Activated naive CD4-positive, alpha-beta T cell treated with anti-CD3 and anti-CD28 coated beads for 36 hours (primary cell): ENCODE measurements at regions of chr16 and their contacts with region 1.

Region 1: DNA sequence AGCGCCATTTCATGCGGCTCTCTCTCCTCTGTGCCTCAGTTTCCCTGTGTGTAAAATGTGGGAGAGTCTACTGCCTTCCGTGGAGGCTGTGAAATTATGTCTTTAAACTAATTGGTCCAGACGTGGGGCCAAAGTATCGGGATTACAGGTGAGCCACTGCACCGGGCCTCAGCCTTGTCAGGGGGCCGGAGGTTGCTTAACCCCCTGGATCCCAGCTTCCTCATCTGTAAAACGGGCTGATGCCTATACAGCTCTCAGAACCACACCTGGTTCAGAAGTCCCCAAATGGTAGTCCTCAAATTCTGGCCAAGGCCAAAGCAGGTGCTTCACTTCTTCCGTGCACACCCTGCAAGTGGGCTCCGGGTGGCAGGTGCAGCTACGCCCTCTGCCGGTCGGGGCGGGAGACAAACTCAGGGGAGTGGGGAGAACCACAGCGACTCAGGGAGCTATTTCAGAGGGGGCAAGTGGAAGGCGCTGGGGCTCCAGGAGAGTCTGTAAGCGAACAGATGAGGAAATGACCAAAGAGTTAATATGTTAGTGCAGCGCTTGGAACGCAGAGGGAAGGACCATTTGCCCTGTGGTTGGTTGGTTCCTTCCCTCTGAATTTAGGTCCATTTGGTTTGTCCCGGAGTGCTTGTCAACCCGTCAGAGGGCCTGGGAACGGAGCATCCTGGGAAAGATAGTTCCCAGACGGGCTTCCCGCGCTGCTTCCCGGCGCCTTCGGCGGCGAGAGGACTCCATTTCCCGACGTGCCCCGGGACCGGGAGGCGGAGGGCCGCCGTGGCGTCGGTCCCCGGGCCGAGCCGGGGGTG is at the start of gene MGRN1:
- DNase-seq: peak; percentile 96
- H3K4me3 Mint-ChIP-seq: peak within 1 kb of the TSS; percentile 97
- H3K27ac Mint-ChIP-seq: peak within 1 kb of the TSS; percentile 99
- H3K4me1 Mint-ChIP-seq: peaks cover 30% of the 10 kb centered on the region
- H3K27me3 Mint-ChIP-seq: no peaks in the 10 kb centered on the region
- total RNA-seq, gene MGRN1: 46.3 to 48.8 TPM

Region 2: DNA sequence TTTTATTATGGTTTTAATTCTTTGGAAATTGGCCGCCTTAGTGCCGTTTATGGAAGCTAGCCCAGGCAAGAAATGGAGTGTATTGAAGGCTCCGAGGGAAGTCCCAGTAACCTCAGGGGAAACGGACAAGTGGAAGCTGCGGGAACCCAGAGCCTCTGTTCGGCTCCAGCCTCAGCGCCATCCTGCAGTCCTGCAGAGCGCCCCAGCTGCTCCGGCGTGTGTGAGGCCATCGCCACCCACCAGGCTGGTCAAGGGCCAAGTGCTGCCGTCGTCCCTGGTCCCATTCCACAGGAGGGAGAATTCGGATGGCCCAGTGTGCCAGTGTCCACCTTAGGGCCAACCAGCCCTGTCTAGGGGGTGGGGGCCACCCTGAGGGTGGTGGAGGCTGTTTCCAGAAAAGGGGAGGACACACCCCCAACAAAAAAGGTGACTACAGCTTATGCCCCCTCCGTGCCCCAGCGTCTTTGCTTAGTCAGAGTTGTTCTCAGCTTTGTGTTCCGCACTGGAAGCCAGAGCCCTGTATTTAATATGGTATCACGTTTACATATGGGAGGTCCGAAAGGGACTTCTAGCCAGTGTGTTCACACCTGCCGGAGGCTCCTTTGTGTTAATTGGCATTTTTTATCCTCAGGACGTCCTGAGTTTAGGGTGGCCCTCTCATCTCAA is 13.4 kb after region 1 on chr16:
- CTCF ChIA-PET with region 1: interaction called, 15 read pairs
- intact Hi-C with region 1: no loop called
- DNase-seq: no peak
- H3K4me3 Mint-ChIP-seq: no peak overlapping the region
- H3K27ac Mint-ChIP-seq: no peak overlapping the region
- H3K4me1 Mint-ChIP-seq: peaks cover 24% of the 10 kb centered on the region
- H3K27me3 Mint-ChIP-seq: no peaks in the 10 kb centered on the region

Region 3: GRCh38 chr16:4660454-4661007 is 36.3 kb after region 1 on chr16:
- CTCF ChIA-PET with region 1: interaction called, 6 read pairs
- intact Hi-C with region 1: loop called (anchors 1 kb)
- DNase-seq: peak; percentile 89
- H3K4me3 Mint-ChIP-seq: no peak overlapping the region
- H3K27ac Mint-ChIP-seq: peak overlapping the region; percentile 61
- H3K4me1 Mint-ChIP-seq: peaks cover 65% of the 10 kb centered on the region
- H3K27me3 Mint-ChIP-seq: no peaks in the 10 kb centered on the region

Region 4: DNA sequence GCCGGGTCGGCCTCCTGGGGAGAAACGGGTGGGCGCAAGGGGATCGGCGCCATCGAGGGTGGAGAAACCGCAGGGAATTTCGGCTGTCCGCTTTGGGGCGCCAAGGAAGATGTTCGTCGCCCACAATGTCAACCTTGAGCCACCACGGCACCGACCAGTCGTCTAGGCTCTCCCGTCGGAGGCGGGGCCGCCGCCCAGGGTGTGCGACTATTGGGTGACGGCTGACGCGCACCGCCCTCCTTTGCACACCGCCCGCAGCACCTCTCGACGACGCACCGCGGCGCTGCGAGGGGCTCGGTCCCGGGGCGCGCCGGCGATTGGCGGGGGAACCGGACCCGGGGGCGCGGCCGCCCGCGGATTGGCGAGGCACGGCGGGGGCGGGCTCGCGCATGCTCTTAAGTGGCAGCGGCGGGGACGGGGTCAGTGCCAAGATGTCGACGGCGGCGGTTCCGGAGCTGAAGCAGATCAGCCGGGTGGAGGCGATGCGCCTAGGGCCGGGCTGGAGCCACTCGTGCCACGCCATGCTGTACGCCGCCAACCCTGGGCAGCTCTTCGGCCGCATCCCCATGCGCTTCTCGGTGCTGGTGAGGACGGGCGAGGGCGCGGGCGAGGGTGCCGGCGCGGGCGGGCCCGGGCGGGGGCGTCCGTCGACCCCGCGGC is 69.2 kb after region 1 on chr16 and contains the start of gene NUDT16L1:
- CTCF ChIA-PET with region 1: no interaction called
- intact Hi-C with region 1: loop called (anchors 1 kb)
- DNase-seq: peak; percentile 96
- H3K4me3 Mint-ChIP-seq: peak within 1 kb of the TSS; percentile 83
- H3K27ac Mint-ChIP-seq: peak within 1 kb of the TSS; percentile 65
- H3K4me1 Mint-ChIP-seq: peaks cover 14% of the 10 kb centered on the region
- H3K27me3 Mint-ChIP-seq: no peaks in the 10 kb centered on the region
- total RNA-seq, gene NUDT16L1: 20.0 to 20.7 TPM

Region 5: GRCh38 chr16:4709481-4709880 is 85.3 kb after region 1 on chr16:
- CTCF ChIA-PET with region 1: no interaction called
- intact Hi-C with region 1: no loop called
- DNase-seq: no peak
- H3K4me3 Mint-ChIP-seq: no peak overlapping the region
- H3K27ac Mint-ChIP-seq: no peak overlapping the region
- H3K4me1 Mint-ChIP-seq: no peaks in the 10 kb centered on the region
- H3K27me3 Mint-ChIP-seq: no peaks in the 10 kb centered on the region